Calu3 (cell line): ENCODE measurements at regions of chr16 and their contacts with region 1.

Region 1: GRCh38 chr16:28879261-28879840 is 1.1 kb downstream of the ATP2A1 start:
- DNase-seq: no peak
- H3K4me3 Mint-ChIP-seq: peak overlapping the region; percentile 88
- H3K27ac Mint-ChIP-seq: peak overlapping the region; percentile 68
- H3K4me1 Mint-ChIP-seq: peaks cover 13% of the 10 kb centered on the region
- H3K27me3 Mint-ChIP-seq: no peaks in the 10 kb centered on the region
- CTCF ChIP-seq: no peak

Region 2: DNA sequence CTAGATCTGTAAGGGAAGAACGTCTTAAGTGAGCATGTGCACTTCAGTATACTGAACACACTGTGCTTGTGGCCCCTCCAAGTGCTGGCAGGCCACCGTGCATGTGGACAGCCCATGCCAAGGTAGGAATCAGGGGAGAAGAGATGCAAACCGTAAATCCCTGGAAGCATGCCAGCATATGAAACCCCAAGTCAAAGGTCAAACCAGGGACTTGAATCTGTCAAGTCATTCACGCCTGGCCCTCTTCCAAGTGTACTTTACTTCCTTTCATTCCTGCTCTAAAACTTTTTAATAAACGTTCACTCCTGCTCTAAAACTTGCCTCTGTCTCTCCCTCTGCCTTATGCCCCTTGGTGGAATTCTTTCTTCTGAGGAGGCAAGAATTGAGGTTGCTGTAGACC is 59.3 kb before region 1 on chr16:
- CTCF ChIA-PET with region 1: interaction called, 10 read pairs
- intact Hi-C with region 1: no loop called
- DNase-seq: no peak
- H3K4me3 Mint-ChIP-seq: no peak overlapping the region
- H3K27ac Mint-ChIP-seq: peak overlapping the region; percentile 63
- H3K4me1 Mint-ChIP-seq: peaks cover 22% of the 10 kb centered on the region
- H3K27me3 Mint-ChIP-seq: no peaks in the 10 kb centered on the region
- CTCF ChIP-seq: no peak